ENCODE measurements at regions of chr11 and their contacts with region 1.

Region 1: GRCh38 chr11:34585735-34586487 is 35.0 kb upstream of the EHF start:
- DNase-seq: peak; percentile 25
- ATAC-seq: peak; percentile 92
- H3K4me3 Mint-ChIP-seq: peak overlapping the region; percentile 29
- H3K27ac Mint-ChIP-seq: peak overlapping the region; percentile 77
- H3K4me1 Mint-ChIP-seq: peaks cover 25% of the 10 kb centered on the region
- H3K27me3 Mint-ChIP-seq: no peaks in the 10 kb centered on the region
- CTCF ChIP-seq: peak; percentile 18

Region 2: GRCh38 chr11:34614344-34615104 is 28.6 kb after region 1 on chr11:
- CTCF ChIA-PET with region 1: interaction called, 10 read pairs
- POLR2A ChIA-PET with region 1: interaction called, 6 read pairs
- intact Hi-C with region 1: loop called (anchors 1 kb)
- DNase-seq: no peak
- ATAC-seq: peak; percentile 53
- H3K4me3 Mint-ChIP-seq: peak overlapping the region; percentile 0
- H3K27ac Mint-ChIP-seq: peak overlapping the region; percentile 86
- H3K4me1 Mint-ChIP-seq: peaks cover 30% of the 10 kb centered on the region
- H3K27me3 Mint-ChIP-seq: no peaks in the 10 kb centered on the region
- CTCF ChIP-seq: no peak

Region 3: DNA sequence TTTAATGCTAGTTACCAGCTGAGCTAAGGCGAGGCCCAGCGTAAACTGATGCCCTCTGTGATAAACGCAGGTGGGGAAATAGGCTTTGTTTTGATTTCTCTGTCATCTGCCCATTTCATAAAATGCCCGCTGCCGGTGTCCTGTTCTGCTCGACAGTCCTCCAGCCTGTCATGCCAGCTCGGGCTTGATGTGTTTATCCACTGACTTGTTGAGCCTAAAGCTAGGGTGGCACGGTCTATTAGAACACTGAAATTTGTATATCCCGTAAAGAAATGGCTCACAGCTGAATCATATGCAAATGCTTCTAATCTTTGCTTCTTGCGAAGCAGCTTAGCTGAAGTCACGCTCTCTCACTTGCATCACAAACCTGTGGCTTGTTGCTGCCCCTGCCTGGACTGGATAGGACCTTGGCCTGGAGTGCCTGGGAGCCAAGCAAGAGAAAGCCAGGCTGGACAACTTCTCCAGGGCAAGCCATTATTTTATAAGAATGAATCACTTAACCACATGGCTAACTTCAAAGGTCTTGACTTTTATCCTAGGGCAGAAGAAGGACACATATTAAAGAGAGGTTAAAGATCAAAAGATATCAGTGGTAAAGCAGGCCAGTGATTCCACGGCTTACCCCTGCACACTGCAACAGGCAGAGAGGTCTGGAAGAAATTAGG is 68.0 kb after region 1 on chr11:
- CTCF ChIA-PET with region 1: interaction called, 79 read pairs
- POLR2A ChIA-PET with region 1: interaction called, 30 read pairs
- intact Hi-C with region 1: loop called (anchors 1 kb)
- DNase-seq: no peak
- ATAC-seq: peak; percentile 65
- H3K4me3 Mint-ChIP-seq: peak overlapping the region; percentile 56
- H3K27ac Mint-ChIP-seq: peak overlapping the region; percentile 80
- H3K4me1 Mint-ChIP-seq: peaks cover 54% of the 10 kb centered on the region
- H3K27me3 Mint-ChIP-seq: no peaks in the 10 kb centered on the region
- CTCF ChIP-seq: no peak

Region 4: DNA sequence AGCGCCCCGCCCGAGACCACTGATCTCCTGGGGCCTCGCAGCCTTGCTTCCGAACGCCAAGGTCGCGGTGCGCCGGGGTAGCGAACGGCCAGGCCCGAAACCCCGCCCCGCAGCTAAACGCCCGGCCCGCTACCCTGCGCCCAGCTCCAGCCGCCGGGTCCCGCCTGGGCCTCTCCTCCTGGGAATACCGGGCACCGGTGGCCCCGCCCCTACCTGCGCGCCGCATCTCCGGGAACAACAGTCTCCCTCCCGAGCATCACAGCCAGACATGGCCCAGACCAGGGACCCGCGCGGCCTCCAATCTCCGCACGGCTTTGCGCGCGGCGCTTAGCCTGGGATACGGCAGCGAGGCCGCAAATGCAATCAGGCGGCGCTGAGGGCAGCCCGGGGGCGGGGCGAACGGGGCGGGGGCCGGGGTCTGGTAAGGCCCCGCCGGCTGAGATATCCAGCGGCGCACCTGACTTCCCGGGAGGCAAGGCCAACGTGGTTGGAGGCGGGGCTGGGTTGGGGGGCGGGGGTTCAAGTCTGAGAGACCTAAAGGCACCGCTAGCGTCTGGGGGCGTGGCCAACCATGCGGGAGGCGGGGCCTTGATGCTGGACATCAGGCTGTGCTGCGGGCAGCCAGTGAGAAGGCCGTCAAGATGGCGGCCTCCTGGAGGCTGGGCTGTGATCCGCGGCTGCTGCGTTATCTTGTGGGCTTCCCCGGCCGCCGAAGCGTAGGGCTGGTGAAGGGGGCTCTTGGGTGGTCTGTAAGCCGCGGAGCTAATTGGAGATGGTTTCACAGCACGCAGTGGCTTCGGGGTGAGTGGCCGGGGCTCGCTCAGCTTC is 330.3 kb after region 1 on chr11 and contains the starts of genes APIP and PDHX:
- CTCF ChIA-PET with region 1: interaction called, 6 read pairs
- POLR2A ChIA-PET with region 1: interaction called, 3 read pairs
- intact Hi-C with region 1: loop called (anchors 1 kb)
- DNase-seq: peak; percentile 93
- ATAC-seq: peak; percentile 96
- H3K4me3 Mint-ChIP-seq: peak within 1 kb of the TSS; percentile 95
- H3K27ac Mint-ChIP-seq: peak within 1 kb of the TSS; percentile 91
- H3K4me1 Mint-ChIP-seq: peaks cover 27% of the 10 kb centered on the region
- H3K27me3 Mint-ChIP-seq: no peaks in the 10 kb centered on the region
- CTCF ChIP-seq: no peak
- total RNA-seq, gene APIP: 17.8 and 18.7 TPM in 2 replicates
- total RNA-seq, gene PDHX: 18.1 and 18.6 TPM in 2 replicates

Region 5: DNA sequence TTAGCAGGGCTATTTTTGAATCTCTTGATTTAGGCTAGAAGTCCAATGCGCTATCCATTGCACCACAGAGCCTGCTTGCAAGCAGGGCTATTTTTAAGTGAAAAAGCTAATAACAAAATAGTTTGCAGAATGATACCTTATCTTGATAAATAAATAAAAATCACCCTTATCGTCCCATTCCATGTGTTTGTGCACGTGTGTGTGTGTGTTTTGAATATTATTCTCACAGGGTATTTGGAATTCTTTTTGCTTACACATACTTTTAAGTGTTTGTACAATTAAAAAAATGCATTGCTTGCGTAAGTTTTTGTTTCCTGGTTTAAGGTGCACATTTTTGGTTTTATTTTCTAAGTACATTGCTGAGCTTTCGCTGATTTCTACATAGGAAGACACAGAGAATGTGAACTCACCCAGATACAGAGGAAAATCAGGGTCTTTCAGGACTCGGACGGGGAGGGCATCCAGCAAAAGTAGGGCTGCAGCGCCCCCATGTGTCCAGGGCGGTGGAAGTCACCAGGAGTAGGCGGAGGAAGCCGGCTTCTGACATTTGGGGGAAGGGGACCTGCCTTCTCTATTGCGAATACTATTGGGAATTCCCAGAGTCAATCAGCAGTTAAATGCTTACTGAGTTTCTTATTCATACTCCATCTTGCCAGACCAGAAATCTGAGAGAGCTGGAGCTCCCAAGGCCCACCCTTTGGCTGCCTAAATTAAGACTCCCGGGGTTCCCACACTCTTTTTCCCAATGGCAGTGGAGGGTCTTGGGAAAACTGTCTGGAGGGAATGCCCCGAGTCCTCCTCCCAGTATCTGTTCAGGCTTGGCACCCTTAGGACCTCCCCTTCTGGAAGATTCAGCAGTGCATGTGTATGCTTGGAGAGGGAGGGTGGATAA is 806.3 kb after region 1 on chr11:
- CTCF ChIA-PET with region 1: interaction called, 20 read pairs
- POLR2A ChIA-PET with region 1: no interaction called
- intact Hi-C with region 1: loop called (anchors 1 kb)
- DNase-seq: peak; percentile 79
- ATAC-seq: peak; percentile 75
- H3K4me3 Mint-ChIP-seq: peak overlapping the region; percentile 47
- H3K27ac Mint-ChIP-seq: no peak overlapping the region
- H3K4me1 Mint-ChIP-seq: peaks cover 25% of the 10 kb centered on the region
- H3K27me3 Mint-ChIP-seq: peaks cover 5% of the 10 kb centered on the region
- CTCF ChIP-seq: peak; percentile 84

Measured in activated B cell treated with CpG ODN at 0.5 μM for 24 hours (primary cell).